SK-N-SH (cell line): ENCODE measurements at regions of chr2 and their contacts with region 1.

Region 1: DNA sequence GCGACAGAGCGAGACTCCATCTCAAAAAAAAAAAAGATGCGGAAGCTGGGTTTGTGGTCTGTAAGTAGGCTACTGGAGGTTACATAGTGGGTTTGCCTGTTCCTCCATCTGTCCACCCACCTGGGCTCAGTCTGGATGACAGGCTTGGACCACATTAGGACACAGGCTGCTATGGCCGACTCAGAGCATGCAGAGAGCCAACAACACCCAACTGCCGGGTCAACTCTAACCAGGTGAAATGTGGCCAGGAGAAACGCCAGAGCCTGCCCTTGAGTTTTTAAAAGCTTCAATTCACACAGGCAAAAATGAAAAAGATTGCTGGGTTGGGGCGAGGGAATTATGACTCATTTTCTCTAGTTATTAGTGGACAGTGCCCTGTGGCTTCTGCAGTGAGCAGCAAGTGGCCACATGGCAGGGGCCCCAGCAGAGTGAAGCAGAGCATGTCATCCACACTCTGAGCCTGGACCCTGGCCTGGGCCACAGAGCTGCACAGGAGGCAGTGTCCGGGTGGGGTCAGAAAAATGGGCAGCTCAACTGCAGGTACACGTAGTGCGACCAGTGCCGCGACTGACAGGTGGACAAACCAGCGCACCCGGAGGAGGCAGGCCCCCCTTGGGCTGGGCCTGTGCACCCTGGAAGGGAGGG is 67.4 kb downstream of the BIN1 start:
- DNase-seq: no peak
- H3K4me3 ChIP-seq: no peak overlapping the region
- H3K27ac ChIP-seq: no peak overlapping the region
- H3K4me1 ChIP-seq: peaks cover 0 to 7% of the 10 kb centered on the region in 2 experiments; a peak in 1 of 4 replicates
- H3K27me3 ChIP-seq: no peaks in the 10 kb centered on the region
- CTCF ChIP-seq: no peak
- EP300 ChIP-seq: no peak
- RAD21 ChIP-seq: no peak

Region 2: GRCh38 chr2:127025359-127026166 is 13.9 kb before region 1 on chr2:
- CTCF ChIA-PET with region 1: interaction called, 17 read pairs
- POLR2A ChIA-PET with region 1: no interaction called
- DNase-seq: peak; percentile 89
- H3K4me3 ChIP-seq: peak overlapping the region; percentile 63 to 68
- H3K27ac ChIP-seq: peak overlapping the region in 1 of 2 experiments; percentile 83; a peak in 2 of 4 replicates
- H3K4me1 ChIP-seq: peaks cover 0 to 11% of the 10 kb centered on the region in 2 experiments; a peak in 2 of 4 replicates
- H3K27me3 ChIP-seq: 0 out of 2 replicates have a peak, but pooled peaks cover 4% of the 10 kb centered on the region
- CTCF ChIP-seq: peak; percentile 54
- EP300 ChIP-seq: no peak
- RAD21 ChIP-seq: peak; percentile 30; the same call in 1 of the 2 replicates

Region 3: GRCh38 chr2:127049927-127050802 is 10.7 kb after region 1 on chr2:
- CTCF ChIA-PET with region 1: interaction called, 21 read pairs
- POLR2A ChIA-PET with region 1: no interaction called
- DNase-seq: peak; percentile 96
- H3K4me3 ChIP-seq: no peak overlapping the region
- H3K27ac ChIP-seq: no peak overlapping the region
- H3K4me1 ChIP-seq: peaks cover 0 to 4% of the 10 kb centered on the region in 2 experiments; a peak in 1 of 4 replicates
- H3K27me3 ChIP-seq: no peaks in the 10 kb centered on the region
- CTCF ChIP-seq: peak; percentile 86
- EP300 ChIP-seq: no peak
- RAD21 ChIP-seq: peak; percentile 83